HEK293 (cell line): ENCODE measurements at regions of chr19 and their contacts with region 1.

Region 1: GRCh38 chr19:50461066-50461875 is 15.0 kb upstream of the EMC10 start:
- H3K4me3 ChIP-seq: no peak overlapping the region
- H3K27ac ChIP-seq: no peak overlapping the region
- H3K4me1 ChIP-seq: no peaks in the 10 kb centered on the region
- CTCF ChIP-seq: peak; percentile 87

Region 2: GRCh38 chr19:50368649-50369570 is 92.4 kb before region 1 on chr19:
- CTCF ChIA-PET with region 1: interaction called, 99 read pairs
- POLR2A ChIA-PET with region 1: interaction called, 5 read pairs
- H3K4me3 ChIP-seq: peak overlapping the region; percentile 41
- H3K27ac ChIP-seq: peak overlapping the region; percentile 48
- H3K4me1 ChIP-seq: no peaks in the 10 kb centered on the region
- CTCF ChIP-seq: peak; percentile 82

Region 3: GRCh38 chr19:50414864-50415660 is 46.2 kb before region 1 on chr19:
- CTCF ChIA-PET with region 1: interaction called, 20 read pairs
- POLR2A ChIA-PET with region 1: no interaction called
- H3K4me3 ChIP-seq: no peak overlapping the region
- H3K27ac ChIP-seq: 0 out of 2 replicates have a peak overlapping the region, but pooled peaks have one; percentile 28
- H3K4me1 ChIP-seq: no peaks in the 10 kb centered on the region
- CTCF ChIP-seq: peak; percentile 84

Region 4: GRCh38 chr19:50447053-50447452 is 14.2 kb before region 1 on chr19:
- CTCF ChIA-PET with region 1: interaction called, 12 read pairs
- POLR2A ChIA-PET with region 1: no interaction called
- H3K4me3 ChIP-seq: no peak overlapping the region
- H3K27ac ChIP-seq: no peak overlapping the region
- H3K4me1 ChIP-seq: no peaks in the 10 kb centered on the region
- CTCF ChIP-seq: no peak

Region 5: DNA sequence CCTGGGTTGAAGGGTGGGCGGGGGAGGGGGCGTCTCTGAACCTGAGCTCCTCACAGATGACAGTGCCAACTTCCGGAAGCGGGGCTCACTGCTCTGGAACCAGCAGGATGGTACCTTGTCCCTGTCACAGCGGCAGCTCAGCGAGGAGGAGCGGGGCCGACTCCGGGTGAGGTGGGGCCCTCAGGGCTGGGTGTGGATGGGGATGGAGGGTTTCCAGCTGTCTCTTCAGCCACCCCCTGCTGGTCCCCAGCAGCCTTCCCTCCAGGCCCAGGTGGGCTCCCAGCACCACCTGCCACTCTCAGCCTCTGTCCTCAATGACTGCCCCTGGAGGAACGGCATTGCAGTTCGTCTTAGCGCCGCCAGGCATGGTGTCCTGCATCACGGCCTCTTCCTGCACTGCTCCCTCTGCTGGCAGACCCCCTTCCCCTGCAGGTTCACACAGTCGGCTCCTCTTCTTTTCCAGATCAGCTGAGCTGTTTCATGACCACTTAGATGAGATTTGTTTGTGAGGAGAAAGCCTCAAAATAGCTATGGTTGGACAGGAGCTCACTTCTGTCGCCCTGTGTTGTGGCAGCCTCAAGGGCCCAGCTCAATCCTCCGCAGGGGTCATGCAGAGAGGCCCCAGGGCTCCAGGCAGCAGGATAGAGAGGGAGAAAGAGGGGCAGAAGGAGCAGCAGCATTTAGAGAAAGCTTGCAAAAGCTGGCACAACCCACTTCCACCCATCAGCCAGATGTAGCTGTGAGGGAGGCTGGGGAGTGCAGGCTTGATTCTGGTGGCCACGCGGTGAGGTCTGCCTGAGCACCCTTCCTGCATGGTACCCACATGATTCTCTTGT is 17.8 kb after region 1 on chr19:
- CTCF ChIA-PET with region 1: interaction called, 20 read pairs
- POLR2A ChIA-PET with region 1: interaction called, 4 read pairs
- H3K4me3 ChIP-seq: no peak overlapping the region
- H3K27ac ChIP-seq: no peak overlapping the region
- H3K4me1 ChIP-seq: peaks cover 7% of the 10 kb centered on the region; the same call in 1 of the 2 replicates
- CTCF ChIP-seq: peak; percentile 96